ENCODE measurements at regions of chr12 and their contacts with region 1.

Region 1: DNA sequence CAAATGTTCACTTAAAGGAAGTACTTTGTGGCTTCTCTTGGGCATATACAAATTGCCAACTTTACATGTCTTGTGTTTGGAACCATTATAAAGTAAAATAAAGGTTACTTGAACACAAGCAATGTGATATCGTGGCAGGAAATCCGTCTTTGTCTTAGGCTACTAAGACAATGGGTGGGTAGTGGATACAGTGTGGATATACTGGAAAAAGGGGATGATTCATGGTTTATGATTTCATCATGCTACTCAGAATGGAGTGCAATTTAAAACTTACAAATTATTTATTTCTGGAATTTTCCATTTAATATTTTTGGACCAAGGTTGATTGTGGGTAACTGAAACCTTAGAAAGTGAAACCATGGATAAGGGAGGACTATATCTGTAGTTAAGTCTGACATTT is 48.4 kb downstream of the MYRFL start:
- DNase-seq: no peak
- ATAC-seq: no peak
- H3K4me3 ChIP-seq: no peak overlapping the region
- H3K27ac ChIP-seq: no peak overlapping the region
- H3K4me1 ChIP-seq: no peaks in the 10 kb centered on the region
- H3K27me3 ChIP-seq: peaks cover 9 to 13% of the 10 kb centered on the region in 2 experiments
- CTCF ChIP-seq: no peak
- EP300 ChIP-seq: no peak
- POLR2A ChIP-seq: no peak
- RAD21 ChIP-seq: no peak

Region 2: GRCh38 chr12:69630191-69630590 is 243.2 kb before region 1 on chr12:
- CTCF ChIA-PET with region 1: no interaction called
- POLR2A ChIA-PET with region 1: no interaction called
- in situ Hi-C with region 1: no loop called
- intact Hi-C with region 1: loop called (anchors 5 kb)
- DNase-seq: peak in 3 of 4 experiments; percentile 20 to 39 (median 34)
- ATAC-seq: peak; percentile 72
- H3K4me3 ChIP-seq: no peak overlapping the region
- H3K27ac ChIP-seq: no peak overlapping the region
- H3K4me1 ChIP-seq: peaks cover 4% of the 10 kb centered on the region in 2 experiments; a peak in 3 of 5 replicates
- H3K27me3 ChIP-seq: 0 out of 5 replicates have a peak, but pooled peaks cover 0 to 6% of the 10 kb centered on the region in 2 experiments
- CTCF ChIP-seq: peak; percentile 49 to 56 (median 54); a peak in 4 of 6 replicates
- EP300 ChIP-seq: no peak
- POLR2A ChIP-seq: no peak
- RAD21 ChIP-seq: peak in 1 of 2 experiments; percentile 47; a peak in 2 of 4 replicates